ENCODE measurements at regions of chr5 and their contacts with region 1.

Region 1: DNA sequence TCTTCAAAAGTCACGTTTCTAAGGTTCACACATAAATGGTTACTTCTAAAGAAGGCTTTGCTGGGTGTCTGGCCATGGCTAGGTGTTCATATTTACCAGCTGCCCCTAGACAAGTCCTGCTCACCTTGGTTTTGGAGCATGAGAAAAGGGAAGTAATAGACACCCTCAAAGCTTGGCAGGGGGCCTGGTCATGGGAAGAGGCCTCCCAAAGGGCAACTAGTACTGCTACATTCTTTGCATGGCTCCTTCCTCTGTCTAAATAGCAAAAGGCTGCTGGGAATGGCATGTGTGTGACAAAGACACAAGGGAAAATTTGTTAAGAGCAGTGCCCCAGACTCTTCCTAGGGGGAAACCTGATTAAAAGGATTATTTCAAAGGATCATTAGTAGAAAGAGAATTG is 93.4 kb downstream of the NRG2 start:
- DNase-seq: peak in 1 of 2 donors; percentile 79
- ATAC-seq: peak in 1 of 2 donors; percentile 28
- H3K4me3 ChIP-seq: no peak overlapping the region
- H3K27ac ChIP-seq: peak overlapping the region; percentile 69 to 87 (median 80)
- H3K4me1 ChIP-seq: peaks cover 50 to 53% of the 10 kb centered on the region in 2 donors
- H3K27me3 ChIP-seq: no peaks in the 10 kb centered on the region
- CTCF ChIP-seq: no peak
- POLR2A ChIP-seq: no peak

Region 2: GRCh38 chr5:139690064-139690802 is 259.5 kb before region 1 on chr5:
- in situ Hi-C with region 1: no loop called
- intact Hi-C with region 1: no loop called
- DNase-seq: no peak
- ATAC-seq: no peak
- H3K4me3 ChIP-seq: no peak overlapping the region
- H3K27ac ChIP-seq: peak overlapping the region; percentile 35 to 98 (median 80)
- H3K4me1 ChIP-seq: peaks cover 51 to 66% of the 10 kb centered on the region in 2 donors
- H3K27me3 ChIP-seq: no peaks in the 10 kb centered on the region
- CTCF ChIP-seq: peak; percentile 48 to 80 (median 71)
- POLR2A ChIP-seq: no peak

Region 3: GRCh38 chr5:139776861-139777260 is 172.8 kb before region 1 on chr5:
- in situ Hi-C with region 1: no loop called
- intact Hi-C with region 1: no loop called
- DNase-seq: no peak
- ATAC-seq: no peak
- H3K4me3 ChIP-seq: no peak overlapping the region
- H3K27ac ChIP-seq: no peak overlapping the region
- H3K4me1 ChIP-seq: peaks cover 0 to 6% of the 10 kb centered on the region in 2 donors
- H3K27me3 ChIP-seq: no peaks in the 10 kb centered on the region
- CTCF ChIP-seq: no peak
- POLR2A ChIP-seq: no peak

Region 4: DNA sequence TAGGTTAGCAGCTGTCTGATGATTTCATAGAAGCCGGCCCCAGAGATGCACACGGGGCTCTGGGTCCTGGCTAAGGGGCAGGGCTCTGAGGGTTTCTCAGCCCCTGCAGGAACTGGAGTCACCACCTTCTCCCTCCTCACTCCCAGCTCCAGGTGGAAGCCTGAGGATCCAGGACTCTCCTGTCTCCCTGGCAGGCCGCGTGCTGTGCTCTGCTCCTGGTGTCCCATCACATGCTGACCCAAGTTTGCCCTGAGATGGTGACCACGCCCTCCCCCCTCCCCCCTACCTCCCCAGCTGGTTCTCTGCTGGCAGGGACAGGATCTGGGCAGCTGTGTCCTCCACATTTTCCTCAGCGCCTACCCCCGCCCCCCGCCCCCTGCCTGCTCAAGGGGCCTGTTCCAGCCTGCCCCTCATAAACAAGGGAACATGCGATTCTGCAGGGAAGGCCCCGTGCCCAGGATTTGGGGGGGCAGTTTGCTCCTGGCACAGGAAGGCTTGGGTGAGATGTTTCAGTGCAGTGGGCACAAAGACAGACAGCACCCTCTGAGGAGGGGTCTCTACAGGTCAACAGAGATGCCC is 66.7 kb before region 1 on chr5:
- in situ Hi-C with region 1: no loop called
- intact Hi-C with region 1: loop called (anchors 2 kb)
- DNase-seq: peak; percentile 53 to 67
- ATAC-seq: peak; percentile 35 to 59
- H3K4me3 ChIP-seq: no peak overlapping the region
- H3K27ac ChIP-seq: peak overlapping the region in 1 of 4 donors; percentile 66
- H3K4me1 ChIP-seq: peaks cover 18 to 19% of the 10 kb centered on the region in 2 donors
- H3K27me3 ChIP-seq: no peaks in the 10 kb centered on the region
- CTCF ChIP-seq: no peak
- POLR2A ChIP-seq: no peak

Region 5: GRCh38 chr5:139903795-139904565 is 45.7 kb before region 1 on chr5:
- in situ Hi-C with region 1: no loop called
- intact Hi-C with region 1: loop called (anchors 5 kb)
- DNase-seq: no peak
- ATAC-seq: peak; percentile 22 to 34
- H3K4me3 ChIP-seq: peak overlapping the region; percentile 53 to 76 (median 62)
- H3K27ac ChIP-seq: peak overlapping the region in 1 of 4 donors; percentile 1
- H3K4me1 ChIP-seq: peaks cover 12 to 26% of the 10 kb centered on the region in 2 donors
- H3K27me3 ChIP-seq: no peaks in the 10 kb centered on the region
- CTCF ChIP-seq: no peak
- POLR2A ChIP-seq: peak in 1 of 2 donors; percentile 12

Measured in gastrocnemius medialis (tissue), 4 donors.